ENCODE measurements at regions of chr9 and their contacts with region 1.

Region 1: GRCh38 chr9:76004526-76004925 is 114.1 kb downstream of the PCSK5 start:
- DNase-seq: no peak
- ATAC-seq: no peak
- H3K4me3 ChIP-seq: no peak overlapping the region
- H3K4me3 Mint-ChIP-seq: no peak overlapping the region
- H3K27ac ChIP-seq: no peak overlapping the region
- H3K27ac Mint-ChIP-seq: no peak overlapping the region
- H3K4me1 ChIP-seq: peaks cover 31% of the 10 kb centered on the region
- H3K4me1 Mint-ChIP-seq: peaks cover 67% of the 10 kb centered on the region
- H3K27me3 ChIP-seq: no peaks in the 10 kb centered on the region
- H3K27me3 Mint-ChIP-seq: no peaks in the 10 kb centered on the region
- CTCF ChIP-seq: no peak

Region 2: DNA sequence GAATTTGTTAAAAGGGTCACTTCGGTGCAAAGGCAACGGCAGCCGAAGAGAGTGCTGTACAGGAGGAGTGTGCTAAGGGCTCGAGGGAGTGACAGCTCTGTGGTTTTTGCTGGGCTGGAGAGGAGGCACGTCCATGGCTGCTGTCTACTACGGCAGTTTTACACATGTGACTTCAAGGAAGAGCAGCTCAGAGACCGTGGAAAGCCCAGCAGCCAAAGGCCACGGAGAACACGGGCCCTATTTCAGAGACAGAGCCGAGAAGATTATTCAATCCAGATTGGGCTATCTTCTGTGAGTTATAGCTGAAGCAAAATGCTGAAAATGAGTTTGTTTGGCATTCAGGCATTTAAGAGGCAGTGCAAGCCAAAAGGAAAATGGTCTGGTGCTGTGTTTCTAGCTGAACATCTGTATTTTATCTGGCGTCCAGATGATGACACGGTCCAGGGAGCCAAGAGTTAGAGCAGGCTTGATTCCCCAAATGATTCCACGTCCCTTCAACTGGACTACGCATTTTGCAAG is 293.3 kb after region 1 on chr9:
- CTCF ChIA-PET with region 1: no interaction called
- POLR2A ChIA-PET with region 1: interaction called, 3 read pairs
- intact Hi-C with region 1: loop called (anchors 2 to 10 kb)
- DNase-seq: peak in 1 of 9 experiments; percentile 4
- ATAC-seq: no peak
- H3K4me3 ChIP-seq: no peak overlapping the region
- H3K4me3 Mint-ChIP-seq: no peak overlapping the region
- H3K27ac ChIP-seq: no peak overlapping the region
- H3K27ac Mint-ChIP-seq: no peak overlapping the region
- H3K4me1 ChIP-seq: no peaks in the 10 kb centered on the region
- H3K4me1 Mint-ChIP-seq: no peaks in the 10 kb centered on the region
- H3K27me3 ChIP-seq: no peaks in the 10 kb centered on the region
- H3K27me3 Mint-ChIP-seq: no peaks in the 10 kb centered on the region
- CTCF ChIP-seq: no peak